PC-3 (cell line): ENCODE measurements at regions of chr1 and their contacts with region 1.

Region 1: GRCh38 chr1:224182866-224183590 is at the start of gene DEGS1:
- DNase-seq: peak; percentile 92
- ATAC-seq: peak; percentile 84
- H3K4me3 ChIP-seq: peak within 1 kb of the TSS; percentile 69
- H3K27ac ChIP-seq: peak within 1 kb of the TSS; percentile 59
- H3K4me1 ChIP-seq: peaks cover 26% of the 10 kb centered on the region
- H3K27me3 ChIP-seq: no peaks in the 10 kb centered on the region
- CTCF ChIP-seq: no peak
- total RNA-seq, gene DEGS1: 71.3 and 72.2 TPM in 2 replicates

Region 2: GRCh38 chr1:224061436-224061835 is 121.6 kb before region 1 on chr1:
- CTCF ChIA-PET with region 1: no interaction called
- POLR2A ChIA-PET with region 1: interaction called, 10 read pairs
- intact Hi-C with region 1: no loop called
- DNase-seq: no peak
- ATAC-seq: no peak
- H3K4me3 ChIP-seq: no peak overlapping the region
- H3K27ac ChIP-seq: no peak overlapping the region
- H3K4me1 ChIP-seq: peaks cover 70% of the 10 kb centered on the region
- H3K27me3 ChIP-seq: no peaks in the 10 kb centered on the region
- CTCF ChIP-seq: no peak

Region 3: DNA sequence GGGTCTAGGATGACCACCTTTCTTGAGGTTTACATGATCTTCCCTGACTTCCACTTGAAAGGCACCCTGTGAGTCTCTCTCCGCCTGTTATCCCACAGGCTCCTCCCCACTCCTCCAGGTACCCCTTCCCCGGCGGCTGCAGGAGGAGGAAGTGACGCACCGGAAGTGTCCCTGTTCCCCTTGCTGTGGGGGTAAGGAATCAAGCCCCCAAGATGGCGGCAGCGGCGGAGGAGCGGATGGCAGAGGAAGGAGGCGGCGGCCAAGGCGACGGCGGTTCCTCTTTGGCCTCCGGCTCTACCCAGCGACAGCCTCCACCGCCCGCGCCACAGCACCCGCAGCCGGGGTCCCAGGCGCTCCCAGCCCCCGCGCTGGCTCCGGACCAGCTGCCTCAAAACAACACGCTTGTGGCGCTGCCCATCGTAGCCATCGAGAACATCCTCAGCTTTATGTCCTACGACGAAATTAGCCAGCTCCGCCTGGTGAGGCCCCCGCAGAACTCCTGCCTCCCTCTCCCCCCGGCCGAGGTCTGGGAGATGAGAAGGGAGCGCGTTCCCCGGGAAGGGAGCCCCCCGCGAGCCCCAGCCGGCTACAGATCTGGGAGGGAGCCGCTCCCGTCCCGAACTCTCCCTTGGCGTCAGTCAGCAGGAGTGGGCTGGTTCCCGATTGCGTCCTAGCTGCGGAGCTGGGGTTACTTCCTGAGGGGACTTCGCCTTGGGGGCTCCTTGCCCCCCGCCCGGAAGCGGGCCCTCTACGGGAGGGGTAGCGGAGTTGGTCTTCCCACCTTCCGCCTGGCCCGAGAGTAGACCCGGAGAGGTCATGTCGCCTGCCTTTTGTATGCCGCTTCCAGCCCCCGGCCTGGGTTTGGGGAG is 68.9 kb before region 1 on chr1 and contains the start of gene FBXO28:
- CTCF ChIA-PET with region 1: no interaction called
- POLR2A ChIA-PET with region 1: interaction called, 4 read pairs
- intact Hi-C with region 1: loop called (anchors 5 kb)
- DNase-seq: peak; percentile 98
- ATAC-seq: peak; percentile 94
- H3K4me3 ChIP-seq: peak within 1 kb of the TSS; percentile 91
- H3K27ac ChIP-seq: peak within 1 kb of the TSS; percentile 48
- H3K4me1 ChIP-seq: peaks cover 26% of the 10 kb centered on the region
- H3K27me3 ChIP-seq: no peaks in the 10 kb centered on the region
- CTCF ChIP-seq: no peak
- total RNA-seq, gene FBXO28: 57.7 and 82.6 TPM in 2 replicates

Region 4: GRCh38 chr1:224199679-224200078 is 16.7 kb after region 1 on chr1:
- CTCF ChIA-PET with region 1: no interaction called
- POLR2A ChIA-PET with region 1: no interaction called
- intact Hi-C with region 1: loop called (anchors 2 kb)
- DNase-seq: peak; percentile 90
- ATAC-seq: peak; percentile 88
- H3K4me3 ChIP-seq: no peak overlapping the region
- H3K27ac ChIP-seq: peak overlapping the region; percentile 88
- H3K4me1 ChIP-seq: peaks cover 33% of the 10 kb centered on the region
- H3K27me3 ChIP-seq: no peaks in the 10 kb centered on the region
- CTCF ChIP-seq: no peak

Region 5: GRCh38 chr1:224235813-224236493 is 52.9 kb after region 1 on chr1:
- CTCF ChIA-PET with region 1: no interaction called
- POLR2A ChIA-PET with region 1: interaction called, 10 read pairs
- intact Hi-C with region 1: no loop called
- DNase-seq: no peak
- ATAC-seq: no peak
- H3K4me3 ChIP-seq: no peak overlapping the region
- H3K27ac ChIP-seq: no peak overlapping the region
- H3K4me1 ChIP-seq: no peaks in the 10 kb centered on the region
- H3K27me3 ChIP-seq: no peaks in the 10 kb centered on the region
- CTCF ChIP-seq: no peak

Region 6: GRCh38 chr1:224343679-224344078 is 160.7 kb after region 1 on chr1:
- CTCF ChIA-PET with region 1: no interaction called
- POLR2A ChIA-PET with region 1: no interaction called
- intact Hi-C with region 1: no loop called
- DNase-seq: no peak
- ATAC-seq: no peak
- H3K4me3 ChIP-seq: no peak overlapping the region
- H3K27ac ChIP-seq: no peak overlapping the region
- H3K4me1 ChIP-seq: no peaks in the 10 kb centered on the region
- H3K27me3 ChIP-seq: no peaks in the 10 kb centered on the region
- CTCF ChIP-seq: no peak

Region 7: GRCh38 chr1:224368409-224368808 is 185.4 kb after region 1 on chr1:
- CTCF ChIA-PET with region 1: no interaction called
- POLR2A ChIA-PET with region 1: interaction called, 24 read pairs
- intact Hi-C with region 1: no loop called
- DNase-seq: no peak
- ATAC-seq: no peak
- H3K4me3 ChIP-seq: no peak overlapping the region
- H3K27ac ChIP-seq: no peak overlapping the region
- H3K4me1 ChIP-seq: no peaks in the 10 kb centered on the region
- H3K27me3 ChIP-seq: no peaks in the 10 kb centered on the region
- CTCF ChIP-seq: no peak